Panc1 (cell line): ENCODE measurements at regions of chr10 and their contacts with region 1.

Region 1: GRCh38 chr10:99845837-99846382 is 63.5 kb downstream of the ABCC2 start:
- DNase-seq: peak; percentile 89
- ATAC-seq: peak; percentile 94
- H3K4me3 ChIP-seq: peak overlapping the region in 1 of 2 experiments; percentile 8; a peak in 1 of 4 replicates
- H3K27ac ChIP-seq: peak overlapping the region; percentile 70
- H3K4me1 ChIP-seq: peaks cover 19% of the 10 kb centered on the region
- H3K27me3 ChIP-seq: no peaks in the 10 kb centered on the region
- CTCF ChIP-seq: peak; percentile 94

Region 2: DNA sequence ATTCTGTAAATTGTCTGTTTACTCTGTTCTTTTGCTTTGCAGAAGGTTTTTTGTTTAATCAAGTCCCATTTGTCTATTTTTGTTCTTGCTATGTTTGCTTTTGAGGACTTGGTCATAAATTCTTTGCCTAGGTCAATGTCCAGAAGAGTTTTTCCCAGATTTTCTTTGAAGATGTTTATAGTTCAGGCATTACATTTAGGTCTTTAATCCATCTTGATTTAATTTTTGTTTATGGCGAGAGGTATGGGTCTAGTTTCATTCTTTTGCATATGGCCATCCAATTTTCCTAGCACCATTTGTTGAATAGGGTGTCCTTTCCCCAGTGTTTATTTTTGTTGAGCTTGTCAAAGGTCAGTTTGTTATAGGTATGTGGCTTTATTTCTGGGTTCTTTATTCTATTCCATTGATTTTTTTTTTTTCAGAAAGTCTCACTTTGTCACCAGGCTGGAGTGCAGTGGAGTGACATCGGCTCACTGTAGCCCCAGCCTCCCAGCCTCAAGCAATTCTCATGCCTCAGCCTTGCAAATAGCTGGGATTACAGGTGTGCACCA is 198.2 kb before region 1 on chr10:
- CTCF ChIA-PET with region 1: no interaction called
- POLR2A ChIA-PET with region 1: no interaction called
- in situ Hi-C with region 1: no loop called
- intact Hi-C with region 1: no loop called
- DNase-seq: no peak
- ATAC-seq: no peak
- H3K4me3 ChIP-seq: no peak overlapping the region
- H3K27ac ChIP-seq: no peak overlapping the region
- H3K4me1 ChIP-seq: no peaks in the 10 kb centered on the region
- H3K27me3 ChIP-seq: no peaks in the 10 kb centered on the region; the same call in 1 of the 2 replicates
- CTCF ChIP-seq: no peak

Region 3: GRCh38 chr10:99966306-99966705 is 120.4 kb after region 1 on chr10:
- CTCF ChIA-PET with region 1: interaction called, 5 read pairs
- POLR2A ChIA-PET with region 1: interaction called, 3 read pairs
- in situ Hi-C with region 1: no loop called
- intact Hi-C with region 1: loop called (anchors 5 kb)
- DNase-seq: peak; percentile 87
- ATAC-seq: peak; percentile 91
- H3K4me3 ChIP-seq: no peak overlapping the region; a peak in 1 of 4 replicates
- H3K27ac ChIP-seq: peak overlapping the region; percentile 82
- H3K4me1 ChIP-seq: peaks cover 43% of the 10 kb centered on the region
- H3K27me3 ChIP-seq: no peaks in the 10 kb centered on the region
- CTCF ChIP-seq: no peak

Region 4: GRCh38 chr10:100046021-100046486 is 200.1 kb after region 1 on chr10:
- CTCF ChIA-PET with region 1: interaction called, 19 read pairs
- POLR2A ChIA-PET with region 1: no interaction called
- in situ Hi-C with region 1: no loop called
- intact Hi-C with region 1: loop called (anchors 5 kb)
- DNase-seq: peak; percentile 72
- ATAC-seq: peak; percentile 93
- H3K4me3 ChIP-seq: no peak overlapping the region
- H3K27ac ChIP-seq: peak overlapping the region; percentile 44; the same call in 1 of the 2 replicates
- H3K4me1 ChIP-seq: peaks cover 26% of the 10 kb centered on the region
- H3K27me3 ChIP-seq: no peaks in the 10 kb centered on the region
- CTCF ChIP-seq: peak; percentile 99

Region 5: GRCh38 chr10:100185364-100186252 is 339.7 kb after region 1 on chr10 and contains the start of gene ERLIN1:
- CTCF ChIA-PET with region 1: no interaction called
- POLR2A ChIA-PET with region 1: no interaction called
- in situ Hi-C with region 1: no loop called
- intact Hi-C with region 1: loop called (anchors 10 kb)
- DNase-seq: peak; percentile 64
- ATAC-seq: peak; percentile 97
- H3K4me3 ChIP-seq: peak within 1 kb of the TSS; percentile 90 to 97
- H3K27ac ChIP-seq: peak within 1 kb of the TSS; percentile 98
- H3K4me1 ChIP-seq: peaks cover 27% of the 10 kb centered on the region
- H3K27me3 ChIP-seq: no peaks in the 10 kb centered on the region
- CTCF ChIP-seq: no peak
- total RNA-seq, gene ERLIN1: 79.8 TPM